Activated naive CD4-positive, alpha-beta T cell treated with anti-CD3 and anti-CD28 coated beads for 36 hours (primary cell): ENCODE measurements at regions of chr6 and their contacts with region 1.

Region 1: DNA sequence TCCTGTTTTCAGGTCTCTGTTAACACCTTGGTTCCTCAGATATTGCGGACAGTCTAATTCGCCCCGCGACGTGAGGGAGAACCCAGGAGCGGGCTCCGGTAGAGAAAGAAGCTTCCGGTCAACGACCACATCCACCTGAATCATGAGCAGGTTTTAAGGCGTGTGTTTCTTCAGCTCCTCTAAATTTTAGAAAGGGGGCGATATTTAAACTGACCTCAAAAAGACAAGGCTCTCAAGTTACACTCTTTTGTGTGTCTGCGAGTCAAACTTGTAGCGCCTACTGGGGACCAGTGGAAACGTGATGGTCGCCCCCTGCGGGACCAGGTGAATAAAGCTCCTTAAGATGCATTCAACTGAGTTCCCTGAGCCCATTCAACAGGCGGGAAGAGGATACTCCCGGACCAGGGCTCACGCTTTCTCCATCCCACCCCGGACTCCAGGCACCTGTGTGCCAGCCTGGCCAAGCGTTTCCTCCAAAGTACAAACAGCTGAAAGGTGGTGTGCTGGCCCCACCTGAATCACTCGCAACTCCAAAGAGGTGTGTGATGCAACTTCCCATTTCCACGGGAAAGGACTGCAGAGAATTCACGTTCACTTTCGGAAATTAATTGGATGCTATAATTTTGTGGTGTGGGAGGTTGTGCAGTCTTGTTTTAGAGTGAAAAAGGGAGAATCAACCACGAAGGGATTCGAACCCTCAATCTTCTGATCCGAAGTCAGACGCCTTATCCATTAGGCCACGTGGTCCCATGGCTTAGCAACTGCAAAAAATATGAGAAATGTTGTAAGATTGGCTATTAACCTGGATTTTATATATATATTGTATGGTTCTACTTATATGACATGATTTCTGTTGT is 17.0 kb downstream of the GPX5 start:
- DNase-seq: peak; percentile 80
- H3K4me3 Mint-ChIP-seq: peak overlapping the region; percentile 91
- H3K27ac Mint-ChIP-seq: peak overlapping the region; percentile 80
- H3K4me1 Mint-ChIP-seq: peaks cover 27% of the 10 kb centered on the region
- H3K27me3 Mint-ChIP-seq: peaks cover 30% of the 10 kb centered on the region

Region 2: GRCh38 chr6:28506807-28507475 is 35.7 kb before region 1 on chr6:
- CTCF ChIA-PET with region 1: no interaction called
- intact Hi-C with region 1: no loop called
- DNase-seq: no peak
- H3K4me3 Mint-ChIP-seq: no peak overlapping the region
- H3K27ac Mint-ChIP-seq: peak overlapping the region; percentile 6
- H3K4me1 Mint-ChIP-seq: peaks cover 13% of the 10 kb centered on the region
- H3K27me3 Mint-ChIP-seq: peaks cover 2% of the 10 kb centered on the region

Region 3: DNA sequence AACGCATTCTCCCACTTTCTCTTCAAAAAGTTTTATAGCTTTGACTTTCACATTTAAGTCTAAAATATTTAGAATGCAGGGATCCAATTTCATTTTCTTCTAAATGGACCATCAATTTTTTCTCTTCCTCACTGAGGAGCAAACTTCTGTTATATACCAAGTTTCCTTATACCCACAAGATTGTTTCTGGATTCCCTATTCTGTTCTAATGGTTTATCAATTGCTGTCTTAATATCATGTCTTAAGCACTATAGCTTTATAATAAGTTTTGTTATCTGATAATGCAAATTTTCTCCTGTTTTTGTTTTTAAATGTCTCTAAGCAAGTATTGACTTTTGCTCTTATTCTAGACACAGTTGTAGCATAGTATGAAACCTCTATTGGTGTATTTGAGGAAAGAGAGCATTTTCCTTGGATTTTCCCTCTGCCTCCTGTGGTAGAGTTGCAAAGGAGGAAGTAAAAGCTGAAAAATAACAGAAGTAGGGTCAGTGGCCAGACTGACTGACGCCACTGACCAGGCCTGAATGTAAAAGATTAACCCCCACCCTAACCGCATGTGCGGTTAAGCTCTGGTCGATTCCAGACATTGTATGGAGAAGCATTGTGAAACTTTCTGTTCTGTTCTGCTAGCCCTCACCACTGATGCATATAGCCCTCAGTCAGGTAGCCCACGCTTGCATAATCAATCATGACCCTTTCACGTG is 23.3 kb after region 1 on chr6:
- CTCF ChIA-PET with region 1: no interaction called
- intact Hi-C with region 1: no loop called
- DNase-seq: no peak
- H3K4me3 Mint-ChIP-seq: no peak overlapping the region
- H3K27ac Mint-ChIP-seq: no peak overlapping the region
- H3K4me1 Mint-ChIP-seq: no peaks in the 10 kb centered on the region
- H3K27me3 Mint-ChIP-seq: peaks cover 42% of the 10 kb centered on the region

Region 4: GRCh38 chr6:28586962-28587745 is 44.5 kb after region 1 on chr6:
- CTCF ChIA-PET with region 1: no interaction called
- intact Hi-C with region 1: loop called (anchors 2 kb)
- DNase-seq: peak; percentile 80
- H3K4me3 Mint-ChIP-seq: peak overlapping the region; percentile 85
- H3K27ac Mint-ChIP-seq: no peak overlapping the region
- H3K4me1 Mint-ChIP-seq: peaks cover 21% of the 10 kb centered on the region
- H3K27me3 Mint-ChIP-seq: peaks cover 61% of the 10 kb centered on the region

Region 5: DNA sequence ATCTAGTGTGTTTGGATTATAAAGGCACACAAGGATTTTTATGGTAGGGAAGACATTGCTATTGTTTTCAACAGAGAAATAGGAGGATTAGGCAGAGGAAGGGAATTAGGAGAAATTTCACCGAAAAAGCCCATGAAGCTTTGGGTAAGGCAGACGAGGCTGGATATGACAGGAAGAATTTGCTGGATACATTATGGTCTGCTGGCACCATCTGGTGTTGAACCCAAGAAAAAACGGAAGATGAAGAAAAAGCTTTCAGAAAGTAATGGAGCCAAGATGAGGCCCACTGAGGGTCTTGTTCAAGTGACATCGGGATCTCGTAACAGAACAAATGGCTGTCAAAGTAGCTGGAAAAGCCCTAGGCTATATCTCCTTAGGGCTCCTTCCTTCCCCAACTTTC is 684.6 kb after region 1 on chr6:
- CTCF ChIA-PET with region 1: no interaction called
- intact Hi-C with region 1: no loop called
- DNase-seq: no peak
- H3K4me3 Mint-ChIP-seq: no peak overlapping the region
- H3K27ac Mint-ChIP-seq: no peak overlapping the region
- H3K4me1 Mint-ChIP-seq: no peaks in the 10 kb centered on the region
- H3K27me3 Mint-ChIP-seq: peaks cover 38% of the 10 kb centered on the region